ENCODE measurements at regions of chr3 and their contacts with region 1.

Region 1: DNA sequence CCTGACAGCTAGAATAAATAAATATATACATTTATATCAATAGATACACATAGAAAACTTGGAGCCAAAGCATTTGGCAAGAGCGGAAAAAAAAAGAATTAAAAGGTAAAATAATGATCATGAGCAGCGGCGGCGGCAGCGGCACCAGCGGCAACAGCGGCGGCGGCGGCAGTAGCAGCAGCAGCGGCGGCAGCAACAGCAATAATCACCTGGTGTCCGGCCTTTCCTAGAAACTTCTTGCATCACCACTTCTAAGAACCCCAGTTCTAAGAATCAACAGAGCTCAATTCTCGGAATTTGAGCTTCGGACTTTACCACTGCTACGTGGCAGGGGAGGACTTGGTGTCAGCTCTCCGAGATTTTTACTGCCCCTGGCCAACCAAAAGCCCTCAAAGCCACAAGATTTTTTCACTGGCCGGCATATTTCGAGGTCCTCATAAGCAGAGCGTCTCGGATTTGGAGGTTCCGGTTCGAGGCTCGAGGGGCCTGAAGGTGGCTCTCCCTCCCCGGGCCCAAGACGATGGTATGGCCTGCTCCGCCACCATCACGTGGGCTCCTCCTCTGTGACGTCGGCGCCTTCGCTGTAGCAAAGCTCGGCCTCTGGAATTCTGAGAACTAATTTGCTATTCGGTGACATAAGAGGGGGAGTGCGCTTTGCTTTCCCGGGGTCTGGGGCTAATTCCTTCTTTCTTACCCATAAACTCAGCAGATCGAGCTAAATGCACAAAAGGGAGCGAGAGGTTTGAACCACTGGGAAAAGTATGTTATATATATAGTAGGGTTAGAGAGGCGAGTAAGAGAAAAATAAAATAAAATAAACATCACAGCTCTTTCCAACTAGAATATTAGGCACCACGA is at the start of gene BCL6:
- DNase-seq: peak; percentile 93 to 94
- ATAC-seq: peak; percentile 48 to 51
- H3K4me3 ChIP-seq: peak within 1 kb of the TSS; percentile 70 to 94 (median 88)
- H3K27ac ChIP-seq: peak within 1 kb of the TSS; percentile 95 to 100 (median 98)
- H3K4me1 ChIP-seq: peaks cover 22% of the 10 kb centered on the region in 2 donors
- H3K27me3 ChIP-seq: no peaks in the 10 kb centered on the region
- CTCF ChIP-seq: peak in 3 of 5 experiments; percentile 16 to 35 (median 23)
- POLR2A ChIP-seq: peak; percentile 95 to 99
- total RNA-seq, gene BCL6: 223 to 363 (median 292) TPM

Region 2: GRCh38 chr3:187783098-187783497 is 37.7 kb after region 1 on chr3:
- in situ Hi-C with region 1: no loop called
- intact Hi-C with region 1: no loop called
- DNase-seq: no peak
- ATAC-seq: peak; percentile 65 to 73
- H3K4me3 ChIP-seq: no peak overlapping the region
- H3K27ac ChIP-seq: no peak overlapping the region
- H3K4me1 ChIP-seq: peaks cover 0 to 4% of the 10 kb centered on the region in 2 donors
- H3K27me3 ChIP-seq: no peaks in the 10 kb centered on the region
- CTCF ChIP-seq: no peak
- POLR2A ChIP-seq: no peak

Region 3: GRCh38 chr3:187955076-187955952 is 209.9 kb after region 1 on chr3:
- in situ Hi-C with region 1: no loop called
- intact Hi-C with region 1: loop called (anchors 2 kb)
- DNase-seq: peak; percentile 43 to 85
- ATAC-seq: peak; percentile 68 to 70
- H3K4me3 ChIP-seq: no peak overlapping the region
- H3K27ac ChIP-seq: peak overlapping the region; percentile 83 to 96 (median 94)
- H3K4me1 ChIP-seq: peaks cover 58 to 79% of the 10 kb centered on the region in 2 donors
- H3K27me3 ChIP-seq: no peaks in the 10 kb centered on the region
- CTCF ChIP-seq: no peak
- POLR2A ChIP-seq: no peak

Region 4: DNA sequence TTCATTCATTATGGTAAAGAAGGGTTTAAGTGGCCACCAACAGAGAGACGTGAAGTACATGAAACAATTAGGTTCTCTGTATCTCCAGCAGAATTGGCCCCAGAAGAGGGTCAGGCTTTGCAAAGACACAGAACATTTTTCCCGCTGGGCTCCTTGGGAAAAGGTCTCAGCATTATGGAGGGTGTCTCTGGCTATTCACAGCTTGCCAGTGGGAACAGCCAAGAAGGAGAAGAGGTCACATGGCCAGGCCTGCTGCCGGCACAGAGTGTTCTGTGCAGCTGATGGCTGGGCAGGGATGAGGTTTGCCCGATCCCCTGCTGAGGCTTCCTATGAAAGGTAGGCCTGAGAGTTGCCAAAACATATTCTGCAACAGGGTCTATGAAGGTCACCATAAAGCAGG is 330.7 kb after region 1 on chr3:
- in situ Hi-C with region 1: loop called in 1 of 4 experiments (anchors 10 kb)
- intact Hi-C with region 1: loop called (anchors 5 kb)
- DNase-seq: peak; percentile 44 to 83
- ATAC-seq: peak; percentile 58 to 74
- H3K4me3 ChIP-seq: no peak overlapping the region
- H3K27ac ChIP-seq: peak overlapping the region; percentile 73 to 86 (median 82)
- H3K4me1 ChIP-seq: peaks cover 13 to 27% of the 10 kb centered on the region in 2 donors
- H3K27me3 ChIP-seq: no peaks in the 10 kb centered on the region
- CTCF ChIP-seq: no peak
- POLR2A ChIP-seq: no peak

Region 5: GRCh38 chr3:188262913-188263683 is 517.7 kb after region 1 on chr3:
- in situ Hi-C with region 1: loop called in 2 of 4 experiments (anchors 5 to 10 kb)
- intact Hi-C with region 1: loop called (anchors 1 kb)
- DNase-seq: peak; percentile 49 to 54
- ATAC-seq: peak; percentile 8 to 17
- H3K4me3 ChIP-seq: no peak overlapping the region
- H3K27ac ChIP-seq: peak overlapping the region; percentile 94 to 99 (median 96)
- H3K4me1 ChIP-seq: peaks cover 83 to 92% of the 10 kb centered on the region in 2 donors
- H3K27me3 ChIP-seq: no peaks in the 10 kb centered on the region
- CTCF ChIP-seq: no peak
- POLR2A ChIP-seq: peak in 1 of 2 donors; percentile 68

Region 6: DNA sequence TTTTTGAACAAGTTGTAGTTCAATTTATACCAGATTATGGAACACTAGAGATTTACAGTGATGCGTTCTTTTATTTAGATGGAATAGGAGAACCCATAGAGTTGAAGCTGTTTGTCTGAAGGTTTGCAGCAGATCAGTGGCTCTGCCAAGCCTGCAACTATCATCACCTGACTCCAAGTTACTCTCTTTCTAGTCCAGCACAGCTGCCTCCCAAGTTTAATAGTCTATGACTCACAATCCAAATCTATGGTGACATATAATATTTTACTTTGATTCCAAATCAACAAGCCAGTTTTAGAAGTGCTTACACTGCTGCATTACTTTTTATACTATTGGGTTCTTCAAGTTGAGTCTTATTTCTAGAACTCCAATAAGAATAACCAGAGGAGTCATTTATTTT is 809.0 kb after region 1 on chr3:
- in situ Hi-C with region 1: loop called in 1 of 4 experiments (anchors 25 kb)
- intact Hi-C with region 1: loop called (anchors 2 kb)
- DNase-seq: peak; percentile 83 to 85
- ATAC-seq: peak; percentile 97
- H3K4me3 ChIP-seq: no peak overlapping the region
- H3K27ac ChIP-seq: peak overlapping the region; percentile 65 to 87 (median 78)
- H3K4me1 ChIP-seq: peaks cover 40 to 49% of the 10 kb centered on the region in 2 donors
- H3K27me3 ChIP-seq: no peaks in the 10 kb centered on the region
- CTCF ChIP-seq: no peak
- POLR2A ChIP-seq: no peak

Region 7: DNA sequence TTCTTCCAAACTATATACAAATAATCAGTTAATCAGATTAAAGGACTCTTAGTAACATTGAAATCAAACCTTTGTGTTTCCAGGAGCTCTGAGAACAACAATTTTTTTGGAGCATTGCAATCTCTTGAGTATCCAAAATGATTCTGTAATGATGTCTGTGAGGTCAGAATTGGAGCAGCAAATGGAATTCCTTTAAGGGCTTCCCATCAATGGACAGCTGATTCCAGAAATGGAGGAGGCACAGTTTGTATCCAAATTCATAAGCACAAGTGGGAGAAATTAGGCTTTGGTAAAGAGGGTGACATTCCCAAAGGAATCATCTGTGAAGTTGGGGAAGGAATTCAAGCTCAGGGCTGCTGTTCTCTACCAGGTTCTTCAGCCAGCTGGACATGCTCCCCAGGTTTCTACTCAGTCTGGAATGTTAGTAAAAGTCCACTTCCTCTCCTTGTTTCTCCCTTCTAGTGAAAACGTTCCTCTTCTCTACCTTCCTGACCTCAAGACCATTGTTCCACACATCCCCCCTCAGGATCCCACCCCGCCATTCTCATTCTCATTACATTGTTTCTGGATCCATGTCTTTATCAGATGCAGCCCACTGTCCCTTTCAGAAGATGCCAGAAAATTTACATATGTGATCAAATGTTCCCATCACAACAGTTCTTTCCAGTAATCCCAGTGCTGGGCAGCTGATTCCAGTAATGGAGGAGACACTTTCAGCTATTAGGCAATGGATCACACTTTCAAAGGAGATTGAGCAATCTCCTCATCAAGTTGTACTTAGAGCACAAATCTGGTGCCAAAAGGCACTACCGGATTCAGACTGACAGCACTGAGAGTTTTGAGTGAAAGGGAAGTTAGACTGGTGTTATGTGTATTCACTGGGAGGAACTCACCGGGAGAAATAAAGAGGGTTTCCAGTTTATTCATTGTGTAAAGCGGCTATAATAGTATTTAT is 1035.0 kb after region 1 on chr3:
- in situ Hi-C with region 1: loop called in 1 of 4 experiments (anchors 25 kb)
- intact Hi-C with region 1: loop called (anchors 5 kb)
- DNase-seq: peak; percentile 63 to 68
- ATAC-seq: peak; percentile 97
- H3K4me3 ChIP-seq: no peak overlapping the region
- H3K27ac ChIP-seq: peak overlapping the region; percentile 61 to 73 (median 70)
- H3K4me1 ChIP-seq: peaks cover 14 to 27% of the 10 kb centered on the region in 2 donors
- H3K27me3 ChIP-seq: no peaks in the 10 kb centered on the region
- CTCF ChIP-seq: no peak
- POLR2A ChIP-seq: no peak

Measured in gastrocnemius medialis (tissue), 4 donors.